Pancreas (tissue), 10 donors: ENCODE measurements at regions of chr11 and their contacts with region 1.

Region 1: GRCh38 chr11:91141655-91142054 is 918.8 kb upstream of the CHORDC1 start:
- DNase-seq: no peak
- ATAC-seq: no peak
- H3K4me3 ChIP-seq: no peak overlapping the region
- H3K27ac ChIP-seq: no peak overlapping the region
- H3K4me1 ChIP-seq: no peaks in the 10 kb centered on the region
- H3K27me3 ChIP-seq: no peaks in the 10 kb centered on the region
- CTCF ChIP-seq: no peak

Region 2: GRCh38 chr11:90774727-90775566 is 366.7 kb before region 1 on chr11:
- intact Hi-C with region 1: no loop called
- DNase-seq: peak in 1 of 6 donors; percentile 8
- ATAC-seq: no peak
- H3K4me3 ChIP-seq: no peak overlapping the region
- H3K27ac ChIP-seq: no peak overlapping the region
- H3K4me1 ChIP-seq: no peaks in the 10 kb centered on the region
- H3K27me3 ChIP-seq: no peaks in the 10 kb centered on the region
- CTCF ChIP-seq: no peak

Region 3: DNA sequence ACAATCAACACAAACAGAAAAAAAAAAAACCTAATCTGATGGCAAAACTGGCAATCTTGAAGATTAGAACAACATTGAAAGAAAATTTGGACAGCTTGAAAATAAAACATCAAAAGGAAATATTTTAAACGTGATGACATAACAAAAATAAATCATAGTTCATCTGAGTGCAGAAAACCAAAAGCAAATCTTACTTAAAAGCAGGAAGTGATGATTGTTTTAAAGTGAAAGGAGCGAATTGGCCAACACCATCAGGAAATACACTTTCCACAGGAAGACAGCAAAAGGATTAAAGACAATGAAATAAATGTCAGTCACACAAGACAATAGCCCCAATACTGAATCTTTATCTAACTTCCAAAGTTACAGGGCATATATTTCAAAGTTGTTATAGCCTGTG is 222.3 kb before region 1 on chr11:
- intact Hi-C with region 1: no loop called
- DNase-seq: no peak
- ATAC-seq: no peak
- H3K4me3 ChIP-seq: no peak overlapping the region
- H3K27ac ChIP-seq: no peak overlapping the region
- H3K4me1 ChIP-seq: no peaks in the 10 kb centered on the region
- H3K27me3 ChIP-seq: no peaks in the 10 kb centered on the region
- CTCF ChIP-seq: no peak

Region 4: DNA sequence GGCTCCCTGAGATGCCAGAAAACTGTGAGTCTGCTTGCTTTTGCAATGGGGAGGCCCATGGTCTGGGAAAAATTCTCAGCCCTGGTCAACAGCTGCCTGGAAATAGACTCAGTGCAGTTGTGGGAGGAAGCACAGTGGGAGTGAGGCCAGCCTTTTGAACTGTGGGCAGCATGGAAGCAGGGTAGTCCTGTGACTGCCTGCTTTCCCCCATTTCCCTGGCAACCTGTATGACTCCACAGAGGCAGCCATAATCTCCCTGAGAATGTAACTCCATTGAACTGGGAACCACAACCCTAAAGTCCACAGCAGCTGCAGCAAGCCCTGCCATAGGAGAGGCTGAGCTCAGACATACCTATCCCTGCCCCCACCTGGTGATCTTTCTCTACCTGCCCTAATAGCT is 588.4 kb after region 1 on chr11:
- intact Hi-C with region 1: loop called in 1 of 3 experiments (anchors 10 kb)
- DNase-seq: no peak
- ATAC-seq: no peak
- H3K4me3 ChIP-seq: no peak overlapping the region
- H3K27ac ChIP-seq: no peak overlapping the region
- H3K4me1 ChIP-seq: no peaks in the 10 kb centered on the region
- H3K27me3 ChIP-seq: no peaks in the 10 kb centered on the region
- CTCF ChIP-seq: no peak